ENCODE measurements at regions of chr3 and their contacts with region 1.

Region 1: DNA sequence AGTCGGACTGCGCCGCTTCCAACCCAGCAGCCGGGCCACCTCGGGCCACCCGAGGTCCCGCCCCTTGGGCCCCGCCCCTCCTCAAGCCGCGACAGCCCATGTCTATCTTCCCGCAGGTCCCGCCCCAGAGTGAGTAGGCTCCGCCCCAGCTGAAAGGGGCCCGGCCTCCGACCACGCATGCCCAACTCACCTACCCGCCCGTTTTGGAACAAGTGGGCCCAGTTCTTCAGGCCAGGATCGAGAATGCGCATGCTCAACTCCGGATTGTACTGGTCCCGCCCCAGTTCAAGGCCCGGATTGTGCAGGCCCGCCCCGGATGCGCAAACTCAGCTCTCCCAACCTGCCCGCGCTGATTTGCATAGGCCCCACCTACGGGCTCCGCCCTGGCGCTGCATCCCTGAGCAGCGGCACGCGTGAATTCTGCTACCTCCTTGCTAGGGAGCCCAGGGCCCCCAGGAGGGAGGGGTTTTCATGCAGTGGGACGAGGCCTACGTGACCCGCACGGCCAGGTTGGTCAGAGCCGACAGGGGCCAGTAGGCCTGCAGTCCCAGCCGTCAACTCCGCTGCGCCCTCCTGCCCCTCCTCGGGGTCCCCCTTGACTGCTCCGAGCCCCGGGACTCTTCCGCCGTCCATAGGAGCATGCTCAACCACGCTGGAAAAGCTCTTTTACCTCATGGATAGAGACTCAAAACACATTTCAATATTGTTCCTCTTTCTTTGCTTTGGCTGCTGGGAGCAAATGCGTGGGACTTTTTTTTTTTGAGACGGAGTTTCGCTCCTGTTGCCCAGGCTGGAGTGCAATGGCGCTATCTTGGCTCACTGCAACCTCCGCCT is at the start of gene PFKFB4:
- DNase-seq: peak; percentile 99 to 100 (median 100)
- H3K4me3 ChIP-seq: peak within 1 kb of the TSS; percentile 69 to 82
- H3K4me3 Mint-ChIP-seq: peak within 1 kb of the TSS; percentile 77 to 96 (median 87)
- H3K27ac ChIP-seq: peak within 1 kb of the TSS; percentile 39
- H3K27ac Mint-ChIP-seq: peak within 1 kb of the TSS; percentile 66 to 89 (median 78)
- H3K4me1 ChIP-seq: peaks cover 23% of the 10 kb centered on the region
- H3K4me1 Mint-ChIP-seq: peaks cover 5 to 22% (median 17%) of the 10 kb centered on the region in 4 donors
- H3K27me3 ChIP-seq: no peaks in the 10 kb centered on the region
- H3K27me3 Mint-ChIP-seq: no peaks in the 10 kb centered on the region
- total RNA-seq, gene PFKFB4: 2.6 to 2.7 TPM

Region 2: GRCh38 chr3:48194446-48195071 is 362.5 kb before region 1 on chr3:
- CTCF ChIA-PET with region 1: no interaction called
- POLR2A ChIA-PET with region 1: no interaction called
- intact Hi-C with region 1: loop called (anchors 5 kb)
- DNase-seq: peak in 3 of 5 donors; percentile 5 to 9 (median 9)
- H3K4me3 ChIP-seq: no peak overlapping the region
- H3K4me3 Mint-ChIP-seq: no peak overlapping the region
- H3K27ac ChIP-seq: no peak overlapping the region
- H3K27ac Mint-ChIP-seq: no peak overlapping the region
- H3K4me1 ChIP-seq: no peaks in the 10 kb centered on the region
- H3K4me1 Mint-ChIP-seq: no peaks in the 10 kb centered on the region
- H3K27me3 ChIP-seq: no peaks in the 10 kb centered on the region
- H3K27me3 Mint-ChIP-seq: peaks cover 0 to 2% of the 10 kb centered on the region in 2 donors

Region 3: GRCh38 chr3:48268381-48269183 is 288.4 kb before region 1 on chr3:
- CTCF ChIA-PET with region 1: interaction called, 4 read pairs
- POLR2A ChIA-PET with region 1: no interaction called
- intact Hi-C with region 1: loop called (anchors 2 kb)
- DNase-seq: peak; percentile 70 to 95 (median 82)
- H3K4me3 ChIP-seq: peak overlapping the region; percentile 30 to 31
- H3K4me3 Mint-ChIP-seq: peak overlapping the region; percentile 74 to 89 (median 84)
- H3K27ac ChIP-seq: peak overlapping the region; percentile 53
- H3K27ac Mint-ChIP-seq: peak overlapping the region; percentile 81 to 96 (median 92)
- H3K4me1 ChIP-seq: peaks cover 25% of the 10 kb centered on the region
- H3K4me1 Mint-ChIP-seq: peaks cover 24 to 42% (median 34%) of the 10 kb centered on the region in 4 donors
- H3K27me3 ChIP-seq: no peaks in the 10 kb centered on the region
- H3K27me3 Mint-ChIP-seq: no peaks in the 10 kb centered on the region

Region 4: GRCh38 chr3:48465531-48466378 is 91.3 kb before region 1 on chr3:
- CTCF ChIA-PET with region 1: interaction called, 3 read pairs
- POLR2A ChIA-PET with region 1: interaction called, 4 read pairs
- intact Hi-C with region 1: loop called (anchors 2 kb)
- DNase-seq: peak; percentile 78 to 83 (median 79)
- H3K4me3 ChIP-seq: peak overlapping the region; percentile 69 to 94
- H3K4me3 Mint-ChIP-seq: peak overlapping the region; percentile 87 to 94 (median 90)
- H3K27ac ChIP-seq: peak overlapping the region; percentile 86
- H3K27ac Mint-ChIP-seq: peak overlapping the region; percentile 92 to 98 (median 96)
- H3K4me1 ChIP-seq: peaks cover 55% of the 10 kb centered on the region
- H3K4me1 Mint-ChIP-seq: peaks cover 30 to 58% (median 49%) of the 10 kb centered on the region in 4 donors
- H3K27me3 ChIP-seq: no peaks in the 10 kb centered on the region
- H3K27me3 Mint-ChIP-seq: no peaks in the 10 kb centered on the region

Region 5: GRCh38 chr3:48532271-48532976 is 24.6 kb before region 1 on chr3:
- CTCF ChIA-PET with region 1: no interaction called
- POLR2A ChIA-PET with region 1: no interaction called
- intact Hi-C with region 1: no loop called
- DNase-seq: no peak
- H3K4me3 ChIP-seq: no peak overlapping the region
- H3K4me3 Mint-ChIP-seq: no peak overlapping the region
- H3K27ac ChIP-seq: no peak overlapping the region
- H3K27ac Mint-ChIP-seq: no peak overlapping the region
- H3K4me1 ChIP-seq: no peaks in the 10 kb centered on the region
- H3K4me1 Mint-ChIP-seq: peaks cover 0 to 7% (median under 1%) of the 10 kb centered on the region in 4 donors
- H3K27me3 ChIP-seq: no peaks in the 10 kb centered on the region
- H3K27me3 Mint-ChIP-seq: no peaks in the 10 kb centered on the region

Region 6: GRCh38 chr3:48609088-48610005 is 52.3 kb after region 1 on chr3 and contains the start of gene UQCRC1:
- CTCF ChIA-PET with region 1: interaction called, 4 read pairs
- POLR2A ChIA-PET with region 1: interaction called, 3 read pairs
- intact Hi-C with region 1: loop called (anchors 1 kb)
- DNase-seq: peak; percentile 87 to 94 (median 93)
- H3K4me3 ChIP-seq: peak within 1 kb of the TSS; percentile 76 to 83
- H3K4me3 Mint-ChIP-seq: peak within 1 kb of the TSS; percentile 93 to 100 (median 98)
- H3K27ac ChIP-seq: peak within 1 kb of the TSS; percentile 89
- H3K27ac Mint-ChIP-seq: peak within 1 kb of the TSS; percentile 95 to 100 (median 98)
- H3K4me1 ChIP-seq: peaks cover 10% of the 10 kb centered on the region
- H3K4me1 Mint-ChIP-seq: peaks cover 12 to 24% (median 19%) of the 10 kb centered on the region in 4 donors
- H3K27me3 ChIP-seq: no peaks in the 10 kb centered on the region
- H3K27me3 Mint-ChIP-seq: no peaks in the 10 kb centered on the region
- total RNA-seq, gene UQCRC1: 73.7 to 91.3 TPM

Region 7: GRCh38 chr3:48656061-48656840 is 99.2 kb after region 1 on chr3:
- CTCF ChIA-PET with region 1: no interaction called
- POLR2A ChIA-PET with region 1: no interaction called
- intact Hi-C with region 1: loop called (anchors 1 kb)
- DNase-seq: peak; percentile 86 to 91 (median 88)
- H3K4me3 ChIP-seq: peak overlapping the region; percentile 29 to 59
- H3K4me3 Mint-ChIP-seq: peak overlapping the region; percentile 80 to 88 (median 84)
- H3K27ac ChIP-seq: peak overlapping the region; percentile 38
- H3K27ac Mint-ChIP-seq: peak overlapping the region; percentile 82 to 93 (median 88)
- H3K4me1 ChIP-seq: peaks cover 19% of the 10 kb centered on the region
- H3K4me1 Mint-ChIP-seq: peaks cover 5 to 31% (median 10%) of the 10 kb centered on the region in 4 donors
- H3K27me3 ChIP-seq: no peaks in the 10 kb centered on the region
- H3K27me3 Mint-ChIP-seq: peaks cover 0 to 3% of the 10 kb centered on the region in 2 donors